ENCODE measurements at regions of chr7 and their contacts with region 1.

Region 1: DNA sequence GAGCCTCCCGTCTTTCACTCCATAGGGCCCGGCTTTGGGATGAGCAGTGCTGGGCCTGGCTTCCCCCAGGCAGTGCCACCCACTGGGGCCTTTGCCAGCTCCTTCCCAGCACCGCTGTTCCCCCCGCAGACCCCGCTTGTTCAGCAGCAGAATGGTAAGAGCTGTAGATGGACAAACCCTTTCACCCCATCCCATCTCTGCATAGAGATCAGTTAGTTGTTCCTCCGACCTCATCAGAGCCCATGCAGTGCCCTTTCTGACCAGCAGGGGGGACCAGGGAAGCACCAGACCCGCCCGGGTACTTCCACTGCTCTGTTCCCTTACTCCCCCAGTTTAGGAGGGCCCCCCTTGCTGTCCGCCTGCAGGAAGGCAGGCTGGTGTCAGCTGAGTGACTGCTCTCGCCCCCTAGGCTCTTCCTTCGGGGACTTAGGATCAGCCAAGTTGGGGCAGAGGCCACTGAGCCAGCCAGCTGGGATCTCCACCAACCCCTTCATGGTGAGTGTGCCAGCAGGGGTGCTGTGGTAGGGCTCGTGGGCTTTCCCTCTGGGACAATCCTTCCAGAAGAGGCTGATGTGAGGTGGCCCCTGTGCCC is 9.8 kb downstream of the SAP25 start:
- DNase-seq: peak; percentile 89
- ATAC-seq: peak; percentile 67
- H3K4me3 Mint-ChIP-seq: no peak overlapping the region
- H3K27ac Mint-ChIP-seq: peak overlapping the region; percentile 65
- H3K4me1 Mint-ChIP-seq: peaks cover 42% of the 10 kb centered on the region
- H3K27me3 Mint-ChIP-seq: no peaks in the 10 kb centered on the region

Region 2: GRCh38 chr7:100478966-100479665 is 84.8 kb before region 1 on chr7 and contains the start of gene TSC22D4:
- CTCF ChIA-PET with region 1: interaction called, 29 read pairs
- POLR2A ChIA-PET with region 1: interaction called, 3 read pairs
- DNase-seq: peak; percentile 95
- ATAC-seq: peak; percentile 84
- H3K4me3 Mint-ChIP-seq: peak within 1 kb of the TSS; percentile 98
- H3K27ac Mint-ChIP-seq: peak within 1 kb of the TSS; percentile 92
- H3K4me1 Mint-ChIP-seq: peaks cover 37% of the 10 kb centered on the region
- H3K27me3 Mint-ChIP-seq: no peaks in the 10 kb centered on the region
- total RNA-seq, gene TSC22D4: 129 to 132 TPM

Region 3: DNA sequence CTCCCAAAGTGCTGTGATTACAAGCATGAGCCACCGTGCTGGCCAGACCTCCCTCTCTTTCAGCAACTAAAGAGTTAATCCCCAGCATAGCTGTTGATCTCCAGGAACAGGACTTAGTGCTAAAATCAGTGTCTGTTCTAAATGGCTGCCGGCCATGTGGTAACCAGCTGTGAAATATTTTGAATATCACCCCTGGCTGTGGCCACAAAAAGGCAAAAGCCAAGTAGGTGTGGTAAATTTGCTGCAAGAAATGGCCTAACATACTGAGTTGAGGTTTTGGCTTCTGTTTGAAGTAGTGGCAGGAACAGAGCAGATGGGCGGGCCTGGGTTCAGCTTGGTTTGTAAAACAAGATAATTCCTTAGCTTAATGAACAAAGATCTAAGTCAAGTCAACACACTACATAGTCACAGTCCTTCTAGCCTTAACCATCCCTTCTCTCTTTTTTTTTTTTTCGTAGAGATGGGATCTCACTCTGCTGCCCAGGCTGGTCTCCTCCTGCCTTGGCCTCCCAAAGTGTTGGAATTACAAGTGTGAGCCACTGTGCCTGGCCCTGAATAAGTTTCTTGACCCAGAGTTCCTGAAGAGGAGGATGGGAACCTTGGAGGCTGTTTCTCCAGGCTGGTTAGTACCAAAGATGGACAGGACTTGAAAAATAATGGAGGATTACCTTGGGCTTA is 47.6 kb before region 1 on chr7:
- CTCF ChIA-PET with region 1: interaction called, 21 read pairs
- POLR2A ChIA-PET with region 1: no interaction called
- DNase-seq: peak; percentile 84
- ATAC-seq: peak; percentile 96
- H3K4me3 Mint-ChIP-seq: peak overlapping the region; percentile 6
- H3K27ac Mint-ChIP-seq: peak overlapping the region; percentile 53
- H3K4me1 Mint-ChIP-seq: peaks cover 26% of the 10 kb centered on the region
- H3K27me3 Mint-ChIP-seq: no peaks in the 10 kb centered on the region

Region 4: GRCh38 chr7:100545360-100546128 is 18.4 kb before region 1 on chr7:
- CTCF ChIA-PET with region 1: interaction called, 213 read pairs
- POLR2A ChIA-PET with region 1: interaction called, 3 read pairs
- DNase-seq: peak; percentile 55
- ATAC-seq: peak; percentile 55
- H3K4me3 Mint-ChIP-seq: peak overlapping the region; percentile 57
- H3K27ac Mint-ChIP-seq: peak overlapping the region; percentile 87
- H3K4me1 Mint-ChIP-seq: peaks cover 97% of the 10 kb centered on the region
- H3K27me3 Mint-ChIP-seq: no peaks in the 10 kb centered on the region

Region 5: DNA sequence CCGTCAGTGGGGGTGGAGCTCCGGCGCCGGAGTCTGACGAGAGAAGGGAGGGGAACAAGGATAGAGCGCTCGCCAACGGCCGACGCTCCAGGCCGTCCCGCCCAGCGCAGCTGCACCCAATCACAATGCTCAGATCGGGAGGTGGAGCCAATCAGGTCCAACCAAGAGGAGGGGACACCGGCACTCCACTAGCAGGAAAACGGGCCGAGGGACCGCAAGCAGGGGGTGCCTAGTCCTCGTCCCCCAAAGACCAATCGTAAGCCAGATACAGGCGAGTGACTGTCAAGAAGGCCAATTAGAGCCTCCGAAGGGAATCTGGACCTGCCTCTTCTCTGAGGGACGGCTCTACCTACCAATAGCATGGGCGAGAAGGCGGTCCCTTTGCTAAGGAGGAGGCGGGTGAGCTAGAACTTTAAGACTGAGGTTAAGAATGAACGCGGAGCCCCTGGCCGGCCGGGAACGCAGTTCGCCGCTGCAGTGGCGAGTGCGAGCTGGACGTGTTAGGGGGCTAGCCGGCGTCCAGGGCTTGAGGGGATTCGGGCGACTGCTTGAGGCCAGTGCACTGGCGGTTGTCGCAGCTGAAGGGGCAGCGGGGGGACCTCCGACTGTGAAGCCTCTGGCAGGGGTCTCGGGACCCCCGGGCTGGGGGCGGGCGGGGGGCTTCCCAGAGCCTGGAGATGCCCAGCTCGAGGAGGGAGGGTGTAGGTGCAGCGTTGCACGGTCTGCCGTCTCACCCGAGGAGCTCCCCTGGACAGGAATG is 22.5 kb after region 1 on chr7 and contains the start of gene FBXO24:
- CTCF ChIA-PET with region 1: interaction called, 57 read pairs
- POLR2A ChIA-PET with region 1: interaction called, 8 read pairs
- DNase-seq: peak; percentile 100
- ATAC-seq: peak; percentile 87
- H3K4me3 Mint-ChIP-seq: peak within 1 kb of the TSS; percentile 93
- H3K27ac Mint-ChIP-seq: peak within 1 kb of the TSS; percentile 98
- H3K4me1 Mint-ChIP-seq: peaks cover 26% of the 10 kb centered on the region
- H3K27me3 Mint-ChIP-seq: peaks cover 10% of the 10 kb centered on the region
- total RNA-seq, gene FBXO24: 0.37 to 0.45 TPM

Measured in activated CD8-positive, alpha-beta T cell treated with anti-CD3 and anti-CD28 coated beads, Interleukin-2, amount 10 ng/mL, durations not matched to agents 7 days and 5 days (primary cell).